CD4-positive, alpha-beta memory T cell (primary cell): ENCODE measurements at regions of chr15 and their contacts with region 1.

Region 1: GRCh38 chr15:51829360-51830275 is at the start of gene TMOD3:
- DNase-seq: peak; percentile 84 to 89 (median 86)
- H3K4me3 ChIP-seq: peak within 1 kb of the TSS; percentile 85 to 91
- H3K4me3 Mint-ChIP-seq: peak within 1 kb of the TSS; percentile 92 to 99 (median 98)
- H3K27ac ChIP-seq: peak within 1 kb of the TSS; percentile 75
- H3K27ac Mint-ChIP-seq: peak within 1 kb of the TSS; percentile 91 to 98 (median 95)
- H3K4me1 ChIP-seq: peaks cover 38% of the 10 kb centered on the region
- H3K4me1 Mint-ChIP-seq: peaks cover 32 to 52% (median 42%) of the 10 kb centered on the region in 4 donors
- H3K27me3 ChIP-seq: no peaks in the 10 kb centered on the region
- H3K27me3 Mint-ChIP-seq: no peaks in the 10 kb centered on the region
- total RNA-seq, gene TMOD3: 53.6 to 59.3 TPM

Region 2: DNA sequence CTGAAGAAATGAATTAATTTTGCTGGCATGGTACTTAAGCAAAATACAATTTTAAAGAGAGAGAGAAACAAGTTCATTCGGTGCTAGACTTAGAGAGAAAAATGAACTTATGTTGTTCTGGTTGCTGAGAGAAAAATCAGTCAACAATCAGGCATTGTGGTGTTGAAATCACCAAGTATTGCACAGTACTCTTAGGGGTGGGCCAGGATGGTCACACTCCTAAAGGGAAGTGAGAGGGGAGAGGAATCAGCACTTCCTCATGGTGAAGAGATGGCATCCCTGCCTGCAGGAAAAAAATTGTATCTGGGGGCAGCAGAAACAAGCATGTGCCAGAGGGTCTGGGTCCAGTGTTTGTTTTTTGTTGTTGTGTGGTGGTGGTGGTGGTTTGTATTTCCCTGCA is 200.0 kb before region 1 on chr15:
- CTCF ChIA-PET with region 1: no interaction called
- POLR2A ChIA-PET with region 1: no interaction called
- intact Hi-C with region 1: no loop called
- DNase-seq: no peak
- H3K4me3 ChIP-seq: no peak overlapping the region
- H3K4me3 Mint-ChIP-seq: no peak overlapping the region
- H3K27ac ChIP-seq: no peak overlapping the region
- H3K27ac Mint-ChIP-seq: no peak overlapping the region
- H3K4me1 ChIP-seq: no peaks in the 10 kb centered on the region
- H3K4me1 Mint-ChIP-seq: peaks cover 0 to 2% (median 0%) of the 10 kb centered on the region in 4 donors
- H3K27me3 ChIP-seq: no peaks in the 10 kb centered on the region
- H3K27me3 Mint-ChIP-seq: peaks cover 8 to 13% of the 10 kb centered on the region in 2 donors

Region 3: GRCh38 chr15:51801391-51801835 is 28.2 kb before region 1 on chr15:
- CTCF ChIA-PET with region 1: no interaction called
- POLR2A ChIA-PET with region 1: no interaction called
- intact Hi-C with region 1: no loop called
- DNase-seq: no peak
- H3K4me3 ChIP-seq: no peak overlapping the region
- H3K4me3 Mint-ChIP-seq: no peak overlapping the region
- H3K27ac ChIP-seq: no peak overlapping the region
- H3K27ac Mint-ChIP-seq: peak overlapping the region in 1 of 7 donors; percentile 30
- H3K4me1 ChIP-seq: no peaks in the 10 kb centered on the region
- H3K4me1 Mint-ChIP-seq: peaks cover 0 to 2% (median 0%) of the 10 kb centered on the region in 4 donors
- H3K27me3 ChIP-seq: no peaks in the 10 kb centered on the region
- H3K27me3 Mint-ChIP-seq: no peaks in the 10 kb centered on the region

Region 4: GRCh38 chr15:51814606-51815005 is 15.0 kb before region 1 on chr15:
- CTCF ChIA-PET with region 1: no interaction called
- POLR2A ChIA-PET with region 1: no interaction called
- intact Hi-C with region 1: no loop called
- DNase-seq: no peak
- H3K4me3 ChIP-seq: no peak overlapping the region
- H3K4me3 Mint-ChIP-seq: no peak overlapping the region
- H3K27ac ChIP-seq: no peak overlapping the region
- H3K27ac Mint-ChIP-seq: no peak overlapping the region
- H3K4me1 ChIP-seq: no peaks in the 10 kb centered on the region
- H3K4me1 Mint-ChIP-seq: no peaks in the 10 kb centered on the region
- H3K27me3 ChIP-seq: no peaks in the 10 kb centered on the region
- H3K27me3 Mint-ChIP-seq: no peaks in the 10 kb centered on the region

Region 5: DNA sequence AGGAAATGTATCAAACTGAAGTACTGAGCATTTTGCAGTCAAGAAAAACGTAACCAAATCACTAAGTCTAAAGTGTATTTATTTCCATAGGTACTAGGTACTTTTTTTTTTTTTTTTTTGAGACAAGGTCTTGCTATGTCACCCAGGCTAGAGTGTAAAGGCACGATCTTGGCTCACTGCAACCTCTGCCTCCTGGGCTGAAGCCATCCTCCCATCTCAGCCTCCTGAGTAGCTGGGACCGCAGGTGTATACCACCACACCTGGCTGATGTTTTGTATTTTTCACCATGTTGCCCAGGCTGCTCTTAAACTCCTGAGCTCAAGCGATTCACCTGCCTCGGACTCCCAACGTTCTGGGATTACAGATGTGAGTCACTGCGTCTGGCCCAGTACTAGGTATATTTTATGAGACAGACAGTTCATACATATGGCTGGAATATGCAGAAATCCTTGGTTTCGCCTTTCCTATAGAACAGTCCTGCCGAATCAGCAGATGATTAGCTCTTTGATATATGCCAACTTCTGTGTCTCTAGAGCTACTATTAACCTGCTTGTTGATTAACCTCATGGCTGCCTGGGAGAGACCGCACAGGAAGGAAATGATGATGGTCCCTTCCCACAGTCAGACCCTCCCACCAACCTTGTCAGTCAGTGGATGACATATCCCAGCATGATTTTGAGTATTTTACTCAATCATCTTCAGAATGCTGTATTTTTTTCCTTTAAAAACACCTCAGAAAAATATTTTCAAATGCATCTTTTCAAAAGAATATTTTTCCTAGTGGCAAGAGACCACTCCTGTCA is 32.1 kb after region 1 on chr15:
- CTCF ChIA-PET with region 1: no interaction called
- POLR2A ChIA-PET with region 1: interaction called, 18 read pairs
- intact Hi-C with region 1: loop called (anchors 1 kb)
- DNase-seq: peak; percentile 64 to 88 (median 77)
- H3K4me3 ChIP-seq: no peak overlapping the region
- H3K4me3 Mint-ChIP-seq: peak overlapping the region; percentile 60 to 88 (median 80)
- H3K27ac ChIP-seq: peak overlapping the region; percentile 27
- H3K27ac Mint-ChIP-seq: peak overlapping the region; percentile 88 to 94 (median 92)
- H3K4me1 ChIP-seq: peaks cover 33% of the 10 kb centered on the region
- H3K4me1 Mint-ChIP-seq: peaks cover 43 to 76% (median 48%) of the 10 kb centered on the region in 4 donors
- H3K27me3 ChIP-seq: no peaks in the 10 kb centered on the region
- H3K27me3 Mint-ChIP-seq: no peaks in the 10 kb centered on the region

Region 6: GRCh38 chr15:51874751-51875528 is 45.3 kb after region 1 on chr15:
- CTCF ChIA-PET with region 1: no interaction called
- POLR2A ChIA-PET with region 1: no interaction called
- intact Hi-C with region 1: loop called (anchors 5 kb)
- DNase-seq: no peak
- H3K4me3 ChIP-seq: no peak overlapping the region
- H3K4me3 Mint-ChIP-seq: no peak overlapping the region
- H3K27ac ChIP-seq: no peak overlapping the region
- H3K27ac Mint-ChIP-seq: peak overlapping the region in 5 of 7 donors; percentile 1 to 71 (median 37)
- H3K4me1 ChIP-seq: peaks cover 16% of the 10 kb centered on the region
- H3K4me1 Mint-ChIP-seq: peaks cover 16 to 34% (median 21%) of the 10 kb centered on the region in 4 donors
- H3K27me3 ChIP-seq: no peaks in the 10 kb centered on the region
- H3K27me3 Mint-ChIP-seq: no peaks in the 10 kb centered on the region

Region 7: GRCh38 chr15:51947124-51947523 is 117.5 kb after region 1 on chr15:
- CTCF ChIA-PET with region 1: no interaction called
- POLR2A ChIA-PET with region 1: no interaction called
- intact Hi-C with region 1: no loop called
- DNase-seq: no peak
- H3K4me3 ChIP-seq: no peak overlapping the region
- H3K4me3 Mint-ChIP-seq: no peak overlapping the region
- H3K27ac ChIP-seq: no peak overlapping the region
- H3K27ac Mint-ChIP-seq: peak overlapping the region in 3 of 7 donors; percentile 22 to 41 (median 26)
- H3K4me1 ChIP-seq: no peaks in the 10 kb centered on the region
- H3K4me1 Mint-ChIP-seq: peaks cover 0 to 8% (median 4%) of the 10 kb centered on the region in 4 donors
- H3K27me3 ChIP-seq: no peaks in the 10 kb centered on the region
- H3K27me3 Mint-ChIP-seq: no peaks in the 10 kb centered on the region